ENCODE measurements at regions of chr18 and their contacts with region 1.

Region 1: DNA sequence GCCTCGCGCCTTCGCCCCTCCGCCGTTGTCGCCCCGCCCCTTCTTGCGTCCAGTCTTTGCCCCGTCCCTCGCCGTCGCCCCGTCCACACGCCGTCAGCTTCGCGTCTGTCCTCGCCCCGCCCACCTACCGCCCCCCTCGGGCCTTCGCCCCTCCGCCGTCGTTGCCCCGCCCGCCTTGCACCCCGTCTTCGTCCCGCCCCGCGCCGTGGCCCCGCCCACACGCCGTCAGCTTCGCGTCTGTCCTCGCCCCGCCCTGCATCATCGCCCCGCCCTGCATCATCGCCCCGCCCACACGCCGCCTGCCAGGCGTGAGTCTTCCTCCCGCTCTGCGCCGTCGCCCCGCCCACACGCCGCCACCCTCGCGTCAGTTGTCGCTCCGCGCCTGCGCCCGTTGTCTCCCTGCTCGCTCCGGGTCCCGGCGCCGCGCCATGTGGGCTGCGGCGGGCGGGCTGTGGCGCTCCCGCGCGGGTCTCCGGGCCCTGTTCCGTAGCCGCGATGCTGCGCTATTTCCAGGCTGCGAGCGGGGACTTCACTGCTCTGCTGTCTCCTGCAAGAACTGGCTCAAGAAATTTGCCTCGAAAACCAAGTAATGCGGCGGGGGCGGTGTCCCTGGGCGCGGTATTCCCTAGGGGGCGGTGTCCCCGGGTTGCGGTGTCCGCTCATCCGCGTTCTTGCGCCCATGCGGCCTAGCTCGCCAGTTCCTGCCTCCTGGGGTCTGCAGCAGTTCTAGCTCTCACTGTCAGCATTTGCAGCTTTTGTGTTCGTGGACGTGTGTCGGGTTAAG is at the start of gene RBFA:
- DNase-seq: peak; percentile 98 to 99
- ATAC-seq: peak; percentile 86 to 87
- H3K4me3 ChIP-seq: peak within 1 kb of the TSS; percentile 71 to 100 (median 88)
- H3K27ac ChIP-seq: peak within 1 kb of the TSS; percentile 82 to 94 (median 87)
- H3K4me1 ChIP-seq: peaks cover 12 to 16% of the 10 kb centered on the region in 2 donors
- H3K27me3 ChIP-seq: no peaks in the 10 kb centered on the region
- CTCF ChIP-seq: peak in 3 of 5 experiments; percentile 56 to 70 (median 64)
- POLR2A ChIP-seq: peak; percentile 72 to 74
- total RNA-seq, gene RBFA: 26.6 to 37.4 (median 32.3) TPM

Region 2: GRCh38 chr18:78480262-78481054 is 1553.8 kb before region 1 on chr18:
- in situ Hi-C with region 1: no loop called
- intact Hi-C with region 1: no loop called
- DNase-seq: no peak
- ATAC-seq: no peak
- H3K4me3 ChIP-seq: no peak overlapping the region
- H3K27ac ChIP-seq: no peak overlapping the region
- H3K4me1 ChIP-seq: no peaks in the 10 kb centered on the region
- H3K27me3 ChIP-seq: no peaks in the 10 kb centered on the region
- CTCF ChIP-seq: no peak
- POLR2A ChIP-seq: no peak

Region 3: DNA sequence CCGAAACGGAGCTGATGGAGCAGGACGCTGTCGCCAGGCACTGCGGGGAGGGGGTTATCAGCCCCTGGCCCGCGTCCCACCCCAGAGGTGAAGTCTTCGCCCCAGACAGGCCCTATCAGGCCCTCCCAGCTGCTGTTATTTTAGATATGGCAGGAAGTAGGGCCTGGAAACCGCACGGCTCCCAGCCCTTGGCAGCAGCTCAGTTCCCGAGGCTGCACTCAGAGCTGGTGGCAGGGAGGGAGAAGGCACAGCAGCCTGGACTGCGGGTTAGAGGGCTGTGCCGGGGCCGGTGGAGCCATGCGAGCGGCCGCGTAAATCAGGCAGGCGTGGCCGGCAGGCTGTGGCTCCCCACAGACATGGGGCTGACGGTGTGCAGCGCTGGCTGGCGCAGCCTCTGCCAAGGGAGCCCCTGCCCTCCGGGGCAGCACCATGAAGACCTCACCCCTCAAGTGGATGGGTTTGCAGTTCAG is 527.1 kb before region 1 on chr18:
- in situ Hi-C with region 1: no loop called
- intact Hi-C with region 1: loop called (anchors 10 kb)
- DNase-seq: peak; percentile 52 to 66
- ATAC-seq: peak; percentile 79 to 85
- H3K4me3 ChIP-seq: peak overlapping the region; percentile 49 to 65 (median 54)
- H3K27ac ChIP-seq: peak overlapping the region; percentile 88 to 90 (median 90)
- H3K4me1 ChIP-seq: peaks cover 23 to 32% of the 10 kb centered on the region in 2 donors
- H3K27me3 ChIP-seq: no peaks in the 10 kb centered on the region
- CTCF ChIP-seq: no peak
- POLR2A ChIP-seq: no peak

Region 4: DNA sequence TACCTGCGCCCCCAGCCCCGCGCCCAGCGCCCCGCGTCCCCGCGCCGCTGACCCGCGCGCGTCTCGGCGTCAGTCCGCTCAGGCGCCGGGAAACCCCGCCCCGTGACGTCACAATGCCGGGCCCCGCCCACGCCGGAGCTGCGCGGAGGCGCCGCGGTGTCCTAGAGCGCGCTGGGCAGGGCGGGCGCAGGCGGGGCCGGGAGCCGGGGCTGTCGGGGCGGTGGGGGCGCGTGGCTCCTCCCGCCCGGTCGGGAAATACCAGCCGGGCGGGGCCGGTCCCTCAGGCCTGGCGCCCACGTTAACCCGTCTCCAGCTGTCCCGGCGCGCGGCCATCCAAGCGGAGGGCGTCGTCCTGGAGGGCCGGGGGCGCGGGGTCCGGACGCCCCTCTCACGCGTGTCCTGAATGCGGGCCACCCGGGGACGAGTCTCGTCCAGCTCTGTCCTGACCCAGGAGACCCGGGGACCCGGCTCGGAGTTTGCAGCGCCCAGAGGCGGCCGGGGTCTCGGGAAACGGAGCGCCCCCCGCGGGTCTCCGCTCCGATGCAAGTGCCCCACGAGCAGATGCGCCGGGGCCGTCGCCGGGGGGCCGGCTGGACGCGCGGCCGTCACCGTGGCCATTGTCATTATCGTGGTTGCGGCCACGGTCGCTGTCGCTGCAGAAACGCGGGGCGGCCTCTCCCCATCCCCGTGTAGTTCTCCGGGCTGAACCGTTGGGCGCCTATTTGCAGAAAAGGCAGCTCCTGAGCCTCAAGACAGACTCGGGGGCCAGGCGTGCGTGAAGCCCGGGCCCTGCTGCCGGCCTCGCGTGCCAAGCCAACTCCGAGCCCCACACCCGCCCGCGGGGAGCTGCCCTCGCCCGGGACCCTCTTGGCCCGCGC is 82.4 kb before region 1 on chr18 and contains the start of gene SLC66A2:
- in situ Hi-C with region 1: no loop called
- intact Hi-C with region 1: loop called (anchors 1 kb)
- DNase-seq: peak; percentile 81 to 85
- ATAC-seq: peak; percentile 68 to 80
- H3K4me3 ChIP-seq: peak within 1 kb of the TSS; percentile 75 to 97 (median 92)
- H3K27ac ChIP-seq: peak within 1 kb of the TSS; percentile 88 to 96 (median 92)
- H3K4me1 ChIP-seq: peaks cover 28 to 41% of the 10 kb centered on the region in 2 donors
- H3K27me3 ChIP-seq: no peaks in the 10 kb centered on the region
- CTCF ChIP-seq: peak in 2 of 5 experiments; percentile 4 to 17
- POLR2A ChIP-seq: peak; percentile 93 to 95
- total RNA-seq, gene SLC66A2: 43.3 to 121 (median 107) TPM

Region 5: GRCh38 chr18:79988451-79989194 is 45.6 kb before region 1 on chr18 and contains the start of gene TXNL4A:
- in situ Hi-C with region 1: loop called in 1 of 4 experiments (anchors 10 kb)
- intact Hi-C with region 1: loop called (anchors 1 kb)
- DNase-seq: peak; percentile 70 to 84
- ATAC-seq: peak; percentile 96 to 98
- H3K4me3 ChIP-seq: peak within 1 kb of the TSS; percentile 84 to 99 (median 89)
- H3K27ac ChIP-seq: peak within 1 kb of the TSS; percentile 94 to 100 (median 96)
- H3K4me1 ChIP-seq: peaks cover 15 to 23% of the 10 kb centered on the region in 2 donors
- H3K27me3 ChIP-seq: no peaks in the 10 kb centered on the region
- CTCF ChIP-seq: no peak
- POLR2A ChIP-seq: peak; percentile 81 to 93
- total RNA-seq, gene TXNL4A: 39.9 to 105 (median 66.4) TPM

Region 6: GRCh38 chr18:80009661-80010550 is 24.4 kb before region 1 on chr18:
- in situ Hi-C with region 1: no loop called
- intact Hi-C with region 1: loop called (anchors 2 kb)
- DNase-seq: peak; percentile 72 to 92
- ATAC-seq: peak; percentile 99 to 100
- H3K4me3 ChIP-seq: no peak overlapping the region
- H3K27ac ChIP-seq: peak overlapping the region in 3 of 4 donors; percentile 50 to 69 (median 57)
- H3K4me1 ChIP-seq: no peaks in the 10 kb centered on the region
- H3K27me3 ChIP-seq: no peaks in the 10 kb centered on the region
- CTCF ChIP-seq: no peak
- POLR2A ChIP-seq: no peak

Region 7: DNA sequence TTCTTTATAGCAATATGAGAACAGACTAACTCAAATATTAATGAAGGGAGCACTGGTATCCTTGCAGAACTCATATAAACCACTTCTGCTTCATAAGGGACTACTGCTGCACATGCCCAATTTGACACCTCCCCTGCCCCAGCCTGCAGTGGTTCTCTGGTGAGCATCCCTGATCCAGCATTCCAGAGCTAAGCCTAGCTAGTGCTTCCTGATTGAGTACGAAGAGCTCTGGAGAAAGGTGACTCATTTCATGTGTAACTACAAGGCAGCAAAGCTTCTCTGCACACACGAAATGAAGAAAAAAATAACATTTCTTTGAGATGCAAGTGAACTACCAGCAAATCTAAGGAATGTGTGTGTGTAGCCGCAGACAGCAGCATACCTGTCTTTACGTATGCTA is 52.0 kb after region 1 on chr18:
- in situ Hi-C with region 1: no loop called
- intact Hi-C with region 1: no loop called
- DNase-seq: no peak
- ATAC-seq: no peak
- H3K4me3 ChIP-seq: no peak overlapping the region
- H3K27ac ChIP-seq: no peak overlapping the region
- H3K4me1 ChIP-seq: no peaks in the 10 kb centered on the region
- H3K27me3 ChIP-seq: no peaks in the 10 kb centered on the region
- CTCF ChIP-seq: no peak
- POLR2A ChIP-seq: no peak

Region 8: GRCh38 chr18:80108728-80109675 is 74.7 kb after region 1 on chr18 and contains the start of gene ADNP2:
- in situ Hi-C with region 1: no loop called
- intact Hi-C with region 1: loop called (anchors 2 kb)
- DNase-seq: peak; percentile 34 to 66
- ATAC-seq: peak; percentile 67 to 77
- H3K4me3 ChIP-seq: peak within 1 kb of the TSS; percentile 57 to 65 (median 64)
- H3K27ac ChIP-seq: peak within 1 kb of the TSS; percentile 70 to 79 (median 76)
- H3K4me1 ChIP-seq: peaks cover 7 to 13% of the 10 kb centered on the region in 2 donors
- H3K27me3 ChIP-seq: peaks cover 0 to 4% (median 0%) of the 10 kb centered on the region in 3 donors
- CTCF ChIP-seq: no peak
- POLR2A ChIP-seq: peak; percentile 32 to 41
- total RNA-seq, gene ADNP2: 2.6 to 4.5 (median 2.9) TPM

Measured in gastrocnemius medialis (tissue), 4 donors.